AG04450 (cell line): ENCODE measurements at regions of chr16 and their contacts with region 1.

Region 1: GRCh38 chr16:87571136-87571867 is 31.0 kb upstream of the JPH3 start:
- DNase-seq: no peak
- H3K4me3 ChIP-seq: no peak overlapping the region
- H3K27ac ChIP-seq: no peak overlapping the region
- H3K27me3 ChIP-seq: peaks cover 16% of the 10 kb centered on the region
- CTCF ChIP-seq: peak; percentile 62

Region 2: GRCh38 chr16:87033541-87034300 is 537.6 kb before region 1 on chr16:
- CTCF ChIA-PET with region 1: no interaction called
- POLR2A ChIA-PET with region 1: no interaction called
- DNase-seq: no peak
- H3K4me3 ChIP-seq: no peak overlapping the region
- H3K27ac ChIP-seq: no peak overlapping the region
- H3K27me3 ChIP-seq: peaks cover 9% of the 10 kb centered on the region
- CTCF ChIP-seq: no peak

Region 3: GRCh38 chr16:87416826-87417527 is 154.3 kb before region 1 on chr16:
- CTCF ChIA-PET with region 1: interaction called, 22 read pairs
- POLR2A ChIA-PET with region 1: no interaction called
- DNase-seq: no peak
- H3K4me3 ChIP-seq: no peak overlapping the region
- H3K27ac ChIP-seq: no peak overlapping the region
- H3K27me3 ChIP-seq: no peaks in the 10 kb centered on the region
- CTCF ChIP-seq: peak; percentile 82

Region 4: DNA sequence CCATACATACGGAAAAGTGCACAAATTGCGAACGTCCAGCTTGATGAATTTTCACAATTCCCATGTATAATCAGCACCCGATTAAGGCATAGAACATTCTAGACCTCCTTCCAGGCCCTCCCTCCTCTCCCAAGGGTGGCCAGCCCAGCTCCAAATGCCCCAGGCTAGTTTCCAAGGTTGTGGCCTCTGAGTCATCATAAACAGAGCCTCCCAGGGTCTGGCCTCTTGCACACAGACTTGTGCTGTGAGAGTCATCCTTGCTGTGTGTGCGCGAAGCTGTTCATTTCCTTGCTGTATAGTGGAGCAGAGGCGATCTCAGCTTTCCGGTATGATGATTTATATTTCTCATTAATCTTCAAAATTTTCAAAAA is 10.5 kb after region 1 on chr16:
- CTCF ChIA-PET with region 1: interaction called, 11 read pairs
- POLR2A ChIA-PET with region 1: interaction called, 8 read pairs
- DNase-seq: peak; percentile 95
- H3K4me3 ChIP-seq: peak overlapping the region; percentile 32; the same call in 1 of the 2 replicates
- H3K27ac ChIP-seq: peak overlapping the region; percentile 99
- H3K27me3 ChIP-seq: no peaks in the 10 kb centered on the region
- CTCF ChIP-seq: no peak